ENCODE measurements at regions of chr14 and their contacts with region 1.

Region 1: DNA sequence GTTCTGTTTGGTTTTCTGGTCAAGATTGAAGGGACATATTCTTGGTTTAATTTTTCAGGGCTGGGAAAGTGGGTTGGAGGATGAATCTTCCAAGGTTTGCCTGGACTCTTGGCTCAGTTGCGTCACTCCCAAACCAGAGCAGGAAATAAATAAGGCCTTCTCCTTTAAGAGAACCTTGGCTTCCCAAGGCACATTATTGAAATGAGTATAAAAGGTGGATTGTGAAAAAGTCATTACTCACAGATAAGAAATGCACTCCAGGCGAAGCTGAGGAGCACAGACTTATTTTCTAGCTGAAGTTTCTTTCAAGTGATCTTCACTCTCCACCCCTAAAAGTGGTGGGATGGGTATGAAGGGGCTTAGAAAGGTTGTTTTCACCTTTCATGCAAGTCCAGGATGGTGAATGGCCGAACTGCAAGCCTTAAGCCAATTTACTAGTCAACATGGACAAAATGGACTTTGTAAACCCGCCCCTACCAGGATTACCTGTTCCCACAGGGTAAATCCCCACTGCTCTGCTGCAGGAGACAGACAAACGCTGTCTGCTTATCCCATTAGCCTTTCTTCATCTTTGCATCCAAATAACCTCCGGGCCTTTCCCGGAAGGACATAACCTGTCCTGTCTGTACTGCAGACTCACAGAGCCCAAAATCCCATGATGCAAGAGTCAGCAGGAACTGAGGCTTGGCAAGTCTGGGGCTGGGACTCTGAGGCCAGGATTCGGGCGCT is 207.6 kb downstream of the BCL11B start:
- DNase-seq: peak; percentile 78
- H3K4me3 Mint-ChIP-seq: peak overlapping the region; percentile 15
- H3K27ac Mint-ChIP-seq: peak overlapping the region; percentile 65
- H3K4me1 Mint-ChIP-seq: peaks cover 17% of the 10 kb centered on the region
- H3K27me3 Mint-ChIP-seq: no peaks in the 10 kb centered on the region
- CTCF ChIP-seq: no peak

Region 2: DNA sequence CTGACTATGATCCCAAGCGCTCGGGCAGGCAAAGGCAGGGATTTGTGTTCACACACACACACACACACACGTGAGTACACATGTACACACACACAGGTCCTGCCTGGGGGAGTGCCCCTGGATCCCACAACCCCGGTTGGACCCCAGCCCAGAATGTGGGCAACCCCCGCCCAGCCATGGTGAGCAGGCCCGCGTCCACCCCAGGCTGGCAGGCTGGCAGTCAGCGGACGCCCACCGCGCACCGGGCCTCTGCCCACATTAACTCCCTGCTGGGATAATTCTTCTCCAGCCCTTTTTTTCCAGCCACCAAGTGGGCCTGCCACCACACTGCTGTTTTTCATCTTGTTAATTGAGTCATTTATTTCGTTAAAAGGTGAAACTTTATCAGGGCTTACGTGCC is 48.6 kb before region 1 on chr14:
- CTCF ChIA-PET with region 1: no interaction called
- POLR2A ChIA-PET with region 1: no interaction called
- intact Hi-C with region 1: no loop called
- DNase-seq: no peak
- H3K4me3 Mint-ChIP-seq: no peak overlapping the region
- H3K27ac Mint-ChIP-seq: no peak overlapping the region
- H3K4me1 Mint-ChIP-seq: peaks cover 9% of the 10 kb centered on the region
- H3K27me3 Mint-ChIP-seq: no peaks in the 10 kb centered on the region
- CTCF ChIP-seq: no peak

Region 3: DNA sequence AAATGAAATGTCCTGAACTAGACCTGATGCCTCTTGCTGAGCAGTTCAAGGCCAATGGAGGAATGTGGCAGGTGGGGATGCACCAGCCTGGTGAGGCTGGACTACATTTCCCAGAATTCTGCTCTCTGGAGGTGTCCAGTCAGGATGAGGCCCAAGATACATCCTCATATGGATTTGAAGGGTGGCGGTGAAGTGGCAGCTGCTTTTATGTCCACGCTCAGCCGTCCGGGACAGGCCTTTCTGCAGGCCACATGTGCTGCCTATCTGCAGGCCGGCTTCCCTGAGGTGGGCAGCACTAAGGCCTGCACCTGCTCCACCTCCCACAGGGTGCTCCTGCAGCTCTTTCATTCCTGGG is 22.6 kb before region 1 on chr14:
- CTCF ChIA-PET with region 1: no interaction called
- POLR2A ChIA-PET with region 1: no interaction called
- intact Hi-C with region 1: no loop called
- DNase-seq: no peak
- H3K4me3 Mint-ChIP-seq: no peak overlapping the region
- H3K27ac Mint-ChIP-seq: no peak overlapping the region
- H3K4me1 Mint-ChIP-seq: peaks cover 8% of the 10 kb centered on the region
- H3K27me3 Mint-ChIP-seq: no peaks in the 10 kb centered on the region
- CTCF ChIP-seq: no peak

Region 4: DNA sequence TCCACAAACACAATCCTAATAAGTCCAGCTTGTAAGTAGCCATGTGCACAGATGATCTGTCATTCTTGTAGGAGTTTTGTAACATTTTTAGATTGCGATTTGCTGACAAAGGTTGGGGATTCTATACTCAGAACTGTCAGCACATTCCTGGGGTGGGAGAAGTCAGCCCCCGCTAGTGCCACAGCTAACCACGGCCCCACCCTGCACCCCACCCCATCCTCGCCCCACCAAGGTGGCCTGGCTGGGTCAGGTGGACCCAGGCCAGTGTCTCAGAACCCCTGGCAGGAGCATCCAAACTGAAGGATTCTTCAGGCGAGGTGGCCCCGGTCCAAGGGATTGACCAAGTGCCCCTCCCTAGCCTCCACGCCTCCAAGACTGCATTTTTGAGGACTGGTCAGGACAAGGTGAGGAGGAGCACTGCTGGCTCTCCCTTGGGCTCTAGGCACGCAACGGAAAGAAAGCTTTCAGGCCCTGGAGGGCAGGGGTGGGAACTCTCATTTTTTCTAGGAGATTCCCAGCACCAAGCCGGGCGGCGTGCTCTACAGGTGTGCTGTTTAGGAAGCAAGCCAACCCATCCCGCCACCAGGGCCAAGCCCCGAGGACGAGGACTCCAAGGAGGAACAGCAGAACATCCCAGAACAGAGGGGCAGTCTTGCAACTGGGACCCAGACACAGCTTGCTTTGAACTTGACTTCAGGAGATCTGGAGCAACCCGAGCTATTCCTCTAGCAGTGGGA is 34.8 kb after region 1 on chr14:
- CTCF ChIA-PET with region 1: no interaction called
- POLR2A ChIA-PET with region 1: interaction called, 11 read pairs
- intact Hi-C with region 1: no loop called
- DNase-seq: peak; percentile 82
- H3K4me3 Mint-ChIP-seq: peak overlapping the region; percentile 9
- H3K27ac Mint-ChIP-seq: peak overlapping the region; percentile 65
- H3K4me1 Mint-ChIP-seq: peaks cover 19% of the 10 kb centered on the region
- H3K27me3 Mint-ChIP-seq: no peaks in the 10 kb centered on the region
- CTCF ChIP-seq: no peak

Measured in MCF 10A (cell line).